Esophagus squamous epithelium (tissue), 5 donors: ENCODE measurements at regions of chr19 and their contacts with region 1.

Region 1: DNA sequence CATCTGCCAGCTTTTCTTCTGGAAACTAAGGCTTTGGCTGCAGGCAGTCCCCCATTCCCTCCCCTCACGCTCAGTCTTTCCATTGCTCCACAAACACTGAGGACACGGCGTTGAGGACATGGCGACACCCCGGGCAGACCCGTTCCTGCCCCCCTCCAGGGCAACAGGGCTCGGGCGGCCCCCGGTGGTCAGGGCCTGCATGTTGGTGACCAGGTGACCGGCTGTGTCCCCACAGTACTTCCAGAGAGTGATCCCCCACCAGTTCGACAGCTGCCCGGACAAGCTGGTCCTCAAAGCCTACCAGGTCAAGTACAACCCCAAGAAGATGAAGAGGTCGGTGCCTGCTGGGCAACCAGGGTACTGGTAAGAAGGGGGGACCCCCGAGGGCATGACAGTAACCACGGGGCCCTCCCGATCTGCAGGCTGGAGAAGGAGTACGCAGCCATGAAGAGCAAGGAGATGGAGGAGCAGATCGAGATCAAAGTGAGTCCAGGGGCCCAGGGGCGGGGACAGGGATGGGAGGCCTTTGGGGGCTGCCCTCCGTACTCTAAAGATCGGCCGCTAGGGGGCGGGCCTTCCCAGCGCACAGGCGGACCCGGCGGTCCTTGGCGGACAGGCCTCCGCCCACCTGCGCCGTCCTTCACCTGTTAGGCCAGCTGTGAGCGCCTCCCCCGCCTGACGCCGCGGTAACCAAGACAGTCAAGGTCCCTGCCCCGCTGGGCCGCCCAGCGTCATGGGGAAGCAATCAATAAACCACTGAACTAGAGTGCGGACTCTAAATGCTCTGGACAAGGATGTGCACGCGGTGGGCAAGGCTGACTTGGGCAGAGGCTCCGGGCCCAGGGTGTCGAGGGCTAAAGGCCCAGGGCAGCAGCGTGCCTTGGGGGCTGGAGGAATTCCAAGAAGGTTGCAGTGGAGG is 21.1 kb downstream of the PRR36 start:
- DNase-seq: no peak
- H3K4me3 ChIP-seq: peak overlapping the region in 1 of 4 donors; percentile 28
- H3K27ac ChIP-seq: no peak overlapping the region
- H3K4me1 ChIP-seq: peaks cover 5 to 25% (median 6%) of the 10 kb centered on the region in 3 donors
- H3K27me3 ChIP-seq: peaks cover 0 to 25% (median 0%) of the 10 kb centered on the region in 4 donors
- CTCF ChIP-seq: peak; percentile 69 to 89 (median 83)
- POLR2A ChIP-seq: no peak

Region 2: DNA sequence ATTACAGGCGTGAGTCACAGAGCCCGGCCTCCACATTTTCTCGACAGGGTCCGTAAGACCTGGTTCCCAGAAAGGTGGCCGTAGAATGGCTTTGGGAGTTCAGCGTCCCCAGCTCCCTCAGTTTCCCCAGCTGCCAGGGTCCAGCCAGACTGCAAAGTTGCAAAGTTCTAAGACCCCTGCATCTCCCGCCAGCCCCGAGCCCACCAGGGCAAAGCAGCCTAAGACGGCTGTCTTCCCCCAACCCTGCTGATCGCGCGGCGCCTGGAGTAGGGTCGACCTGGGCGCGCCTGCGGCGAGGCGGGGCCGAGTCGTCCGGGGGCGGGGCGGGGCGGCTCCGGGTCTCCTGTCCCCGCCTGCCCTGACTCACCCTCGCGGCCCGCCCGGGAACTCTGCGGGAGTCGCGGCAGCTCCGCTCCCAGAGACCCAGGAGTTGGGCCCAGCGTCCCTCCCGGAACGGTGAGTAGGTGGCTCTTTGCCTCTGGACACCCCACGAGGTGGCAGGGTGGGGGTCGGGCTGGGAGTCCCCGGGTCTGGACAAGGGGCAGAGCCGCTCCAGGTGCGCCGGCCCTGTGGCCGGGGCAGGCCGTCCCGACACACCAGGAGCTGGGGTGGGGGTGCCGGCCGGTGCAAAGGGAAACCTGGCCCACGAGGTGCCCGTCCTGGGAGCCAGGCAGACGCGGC is 35.2 kb after region 1 on chr19 and contains the start of gene LRRC8E:
- intact Hi-C with region 1: no loop called
- DNase-seq: no peak
- H3K4me3 ChIP-seq: peak within 1 kb of the TSS; percentile 50 to 73 (median 67)
- H3K27ac ChIP-seq: peak within 1 kb of the TSS; percentile 50 to 80 (median 79)
- H3K4me1 ChIP-seq: peaks cover 7 to 15% (median 11%) of the 10 kb centered on the region in 3 donors
- H3K27me3 ChIP-seq: peaks cover 0 to 42% (median 0%) of the 10 kb centered on the region in 4 donors
- CTCF ChIP-seq: no peak
- POLR2A ChIP-seq: peak in 2 of 4 donors; percentile 45 to 65
- total RNA-seq, gene LRRC8E: 7.6 to 17.0 (median 9.5) TPM

Region 3: DNA sequence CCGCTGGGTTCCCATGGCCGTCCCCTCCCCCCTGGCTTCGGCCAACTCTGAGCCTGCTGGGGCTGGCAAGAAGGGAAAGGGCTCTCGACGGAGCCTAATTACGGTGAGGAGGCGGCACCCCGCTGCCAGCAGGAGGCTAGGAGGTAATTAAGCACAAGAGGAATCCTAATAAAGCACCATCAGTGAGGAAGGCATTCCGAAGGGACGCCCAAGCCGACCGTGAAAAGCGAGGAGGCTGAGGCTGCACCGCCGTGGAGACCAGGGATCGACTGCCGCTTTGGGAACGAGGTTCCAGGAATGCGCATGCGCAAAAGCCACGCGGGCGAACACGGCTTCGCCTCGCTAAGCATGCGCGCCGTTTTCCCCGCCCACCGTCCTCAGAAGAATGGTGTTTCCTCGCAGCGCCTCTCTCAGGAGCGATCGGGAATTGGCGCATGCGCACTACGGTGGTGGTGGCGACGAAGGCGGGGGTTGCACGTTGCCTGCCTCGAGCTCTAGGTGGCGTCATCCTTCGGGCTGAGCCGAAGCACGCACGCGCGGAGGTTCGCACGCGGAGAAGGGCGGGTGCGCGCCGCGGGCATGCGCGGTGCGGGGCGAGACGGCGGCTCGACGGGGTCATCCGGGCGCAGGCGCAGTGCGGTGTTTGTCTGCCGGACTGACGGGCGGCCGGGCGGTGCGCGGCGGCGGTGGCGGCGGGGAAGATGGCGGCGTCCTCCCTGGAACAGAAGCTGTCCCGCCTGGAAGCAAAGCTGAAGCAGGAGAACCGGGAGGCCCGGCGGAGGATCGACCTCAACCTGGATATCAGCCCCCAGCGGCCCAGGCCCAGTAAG is 50.3 kb after region 1 on chr19 and contains the start of gene MAP2K7:
- intact Hi-C with region 1: loop called (anchors 10 kb)
- DNase-seq: peak; percentile 90
- H3K4me3 ChIP-seq: peak within 1 kb of the TSS; percentile 66 to 99 (median 78)
- H3K27ac ChIP-seq: peak within 1 kb of the TSS; percentile 88 to 95 (median 92)
- H3K4me1 ChIP-seq: peaks cover 28 to 80% (median 56%) of the 10 kb centered on the region in 3 donors
- H3K27me3 ChIP-seq: peaks cover 0 to 11% (median 0%) of the 10 kb centered on the region in 4 donors
- CTCF ChIP-seq: peak; percentile 3 to 96 (median 42)
- POLR2A ChIP-seq: peak in 3 of 4 donors; percentile 66 to 86 (median 71)
- total RNA-seq, gene MAP2K7: 8.6 to 17.3 (median 13.8) TPM

Region 4: DNA sequence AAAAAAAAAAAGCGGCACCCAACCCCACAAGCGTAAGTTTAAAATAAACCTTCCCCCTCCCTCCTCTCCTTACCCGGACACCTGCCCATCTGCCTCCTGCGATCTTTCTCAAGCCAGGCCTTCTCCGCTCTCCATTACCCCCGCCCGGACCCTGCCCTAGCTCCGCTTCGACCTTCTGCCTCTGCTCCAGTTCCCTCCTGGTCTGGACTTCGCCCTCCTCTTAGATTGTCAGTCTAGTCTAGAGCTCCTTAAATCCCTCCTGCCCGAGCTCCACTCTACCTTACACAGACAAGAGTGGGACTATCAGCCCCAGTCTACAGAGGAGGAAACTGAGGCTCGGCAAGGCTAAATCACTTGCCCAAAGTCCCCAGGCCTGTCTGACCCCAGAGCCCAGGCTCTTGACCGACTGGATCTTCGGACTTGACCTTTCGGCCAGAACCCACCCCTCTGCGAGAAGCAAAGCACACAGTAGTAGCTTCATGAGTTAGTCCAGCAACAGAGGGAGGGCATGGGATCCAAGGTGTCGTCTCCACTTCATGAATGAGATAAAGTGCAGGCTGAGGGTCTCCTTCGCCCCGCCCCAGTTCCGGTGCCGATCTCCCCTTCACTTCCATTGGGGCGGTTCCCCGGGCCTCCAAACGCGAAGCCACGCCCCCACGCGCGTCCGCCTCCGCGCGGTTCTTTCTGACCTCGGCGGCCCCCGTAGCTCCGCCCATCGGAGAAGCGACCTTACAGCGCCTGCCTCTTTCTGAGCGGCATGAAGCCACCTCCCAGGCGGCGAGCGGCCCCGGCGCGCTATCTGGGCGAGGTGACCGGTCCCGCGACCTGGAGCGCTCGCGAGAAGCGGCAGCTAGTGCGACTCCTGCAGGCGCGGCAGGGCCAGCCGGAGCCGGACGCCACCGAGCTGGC is 66.8 kb after region 1 on chr19 and contains the start of gene SNAPC2:
- intact Hi-C with region 1: no loop called
- DNase-seq: peak; percentile 82
- H3K4me3 ChIP-seq: peak within 1 kb of the TSS; percentile 55 to 96 (median 70)
- H3K27ac ChIP-seq: peak within 1 kb of the TSS; percentile 86 to 97 (median 94)
- H3K4me1 ChIP-seq: peaks cover 45 to 90% (median 49%) of the 10 kb centered on the region in 3 donors
- H3K27me3 ChIP-seq: peaks cover 13 to 54% (median 24%) of the 10 kb centered on the region in 4 donors
- CTCF ChIP-seq: peak in 1 of 6 experiments; percentile 18
- POLR2A ChIP-seq: peak in 2 of 4 donors; percentile 38 to 63
- total RNA-seq, gene SNAPC2: 6.2 to 10.9 (median 6.4) TPM